Activated B cell treated with CpG ODN at 0.5 μM for 24 hours (primary cell): ENCODE measurements at regions of chr11 and their contacts with region 1.

Region 1: GRCh38 chr11:58647141-58647699 is 24.8 kb downstream of the CNTF start:
- DNase-seq: peak; percentile 33
- ATAC-seq: peak; percentile 93
- H3K4me3 Mint-ChIP-seq: peak overlapping the region; percentile 3
- H3K27ac Mint-ChIP-seq: peak overlapping the region; percentile 21
- H3K4me1 Mint-ChIP-seq: peaks cover 20% of the 10 kb centered on the region
- H3K27me3 Mint-ChIP-seq: peaks cover 2% of the 10 kb centered on the region
- CTCF ChIP-seq: no peak

Region 2: GRCh38 chr11:58629857-58630256 is 17.4 kb before region 1 on chr11:
- CTCF ChIA-PET with region 1: interaction called, 11 read pairs
- POLR2A ChIA-PET with region 1: no interaction called
- intact Hi-C with region 1: no loop called
- DNase-seq: no peak
- ATAC-seq: no peak
- H3K4me3 Mint-ChIP-seq: no peak overlapping the region
- H3K27ac Mint-ChIP-seq: no peak overlapping the region
- H3K4me1 Mint-ChIP-seq: peaks cover 22% of the 10 kb centered on the region
- H3K27me3 Mint-ChIP-seq: no peaks in the 10 kb centered on the region
- CTCF ChIP-seq: no peak

Region 3: DNA sequence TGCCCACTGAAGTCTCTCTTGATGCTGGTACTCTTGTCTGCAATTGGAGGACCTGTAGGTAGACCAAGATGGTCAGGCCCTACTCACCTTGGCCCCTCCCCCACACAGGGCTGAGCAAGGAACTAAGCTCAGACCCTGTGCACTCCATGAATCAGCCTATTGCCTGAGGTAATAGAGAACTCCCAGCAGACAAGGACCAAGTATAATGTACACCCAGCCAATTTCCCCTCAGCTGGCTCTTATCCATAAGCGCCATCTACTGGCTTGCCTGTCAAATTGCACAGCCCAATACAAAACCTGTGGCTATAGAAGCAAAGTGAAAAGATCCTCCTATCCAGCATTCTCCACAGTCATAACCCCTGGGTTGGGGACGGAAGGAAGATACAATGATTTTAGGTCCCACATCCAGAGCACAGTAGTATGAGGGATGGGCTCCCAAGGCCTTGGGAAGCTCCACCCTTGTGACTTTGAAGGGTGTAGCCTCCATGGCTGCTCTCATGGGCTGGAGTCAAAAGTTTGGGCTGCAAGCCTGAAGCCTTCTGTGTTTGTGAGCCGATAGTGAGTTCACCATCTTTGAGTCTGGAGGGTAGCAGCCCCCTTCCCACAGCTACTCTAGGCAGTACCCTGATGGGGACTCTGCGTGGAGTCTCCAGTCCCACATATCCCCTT is 141.3 kb after region 1 on chr11:
- CTCF ChIA-PET with region 1: interaction called, 5 read pairs
- POLR2A ChIA-PET with region 1: no interaction called
- intact Hi-C with region 1: loop called (anchors 1 kb)
- DNase-seq: no peak
- ATAC-seq: peak; percentile 73
- H3K4me3 Mint-ChIP-seq: no peak overlapping the region
- H3K27ac Mint-ChIP-seq: no peak overlapping the region
- H3K4me1 Mint-ChIP-seq: no peaks in the 10 kb centered on the region
- H3K27me3 Mint-ChIP-seq: peaks cover 3% of the 10 kb centered on the region
- CTCF ChIP-seq: no peak